OCI-LY7 (cell line): ENCODE measurements at regions of chr1 and their contacts with region 1.

Region 1: GRCh38 chr1:204053893-204054292 is 19.0 kb upstream of the SOX13 start:
- DNase-seq: no peak
- H3K4me3 ChIP-seq: no peak overlapping the region
- H3K27ac ChIP-seq: no peak overlapping the region
- H3K4me1 ChIP-seq: no peaks in the 10 kb centered on the region
- CTCF ChIP-seq: no peak

Region 2: DNA sequence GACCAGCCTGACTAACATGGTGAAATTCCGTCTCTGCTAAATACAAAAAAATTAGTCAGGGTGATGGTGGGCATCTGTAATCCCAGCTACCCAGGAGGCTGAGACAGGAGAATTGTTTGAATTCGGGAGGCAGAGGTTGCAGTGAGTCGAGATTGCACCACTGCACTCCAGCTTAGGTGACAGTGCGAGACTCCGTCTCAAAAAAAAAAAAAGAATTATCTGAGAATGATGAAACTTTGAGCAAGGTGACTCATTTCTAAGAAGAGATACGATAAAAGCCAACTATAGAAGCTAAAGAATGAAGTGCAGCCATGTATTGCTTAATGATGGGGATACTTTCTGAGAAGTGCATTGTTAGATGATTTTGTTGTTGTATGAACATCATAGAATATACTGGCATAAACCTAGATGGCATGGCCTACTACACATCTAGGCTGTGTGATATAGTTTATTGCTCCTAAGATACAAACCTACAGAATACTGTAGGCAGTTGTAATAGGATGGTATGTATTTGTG is 127.8 kb before region 1 on chr1:
- CTCF ChIA-PET with region 1: no interaction called
- POLR2A ChIA-PET with region 1: no interaction called
- intact Hi-C with region 1: no loop called
- DNase-seq: no peak
- H3K4me3 ChIP-seq: no peak overlapping the region
- H3K27ac ChIP-seq: no peak overlapping the region
- H3K4me1 ChIP-seq: no peaks in the 10 kb centered on the region
- CTCF ChIP-seq: no peak

Region 3: DNA sequence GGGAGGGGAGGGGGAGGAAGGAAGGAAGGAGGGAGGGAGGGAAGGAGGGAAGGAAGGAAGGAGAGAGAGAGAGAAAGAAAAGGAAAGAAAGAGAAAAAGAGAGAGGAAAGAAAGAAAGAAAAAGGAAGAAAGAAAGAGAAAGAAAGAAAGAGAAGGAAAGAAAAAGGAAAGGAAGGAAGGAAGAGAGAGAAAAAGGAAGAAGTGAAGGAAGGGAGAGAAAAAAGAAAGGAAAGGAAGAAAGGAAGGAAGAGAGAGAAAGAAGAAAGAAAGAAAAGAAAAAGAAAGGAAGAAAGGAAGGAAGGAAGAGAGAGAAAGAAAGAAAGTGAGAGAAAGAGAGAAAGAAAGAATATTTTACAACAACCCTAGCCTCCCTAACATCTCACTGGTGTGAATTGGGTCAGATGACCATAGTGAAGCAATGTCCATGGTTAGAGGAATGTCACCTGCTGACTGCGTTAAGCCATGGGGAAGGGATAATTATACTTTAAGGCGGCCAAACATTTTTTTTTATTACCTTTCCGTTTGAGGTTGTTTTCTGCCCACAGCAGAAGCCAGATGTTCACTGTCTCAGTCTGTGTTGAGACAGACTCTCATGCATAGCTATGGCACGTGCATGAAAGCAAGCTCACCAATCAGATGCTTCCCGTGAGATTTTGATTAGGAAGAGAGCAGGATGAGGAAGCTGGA is 116.1 kb before region 1 on chr1:
- CTCF ChIA-PET with region 1: no interaction called
- POLR2A ChIA-PET with region 1: interaction called, 5 read pairs
- intact Hi-C with region 1: loop called (anchors 1 kb)
- DNase-seq: peak; percentile 86
- H3K4me3 ChIP-seq: peak overlapping the region; percentile 5
- H3K27ac ChIP-seq: peak overlapping the region; percentile 91
- H3K4me1 ChIP-seq: peaks cover 67% of the 10 kb centered on the region
- CTCF ChIP-seq: no peak

Region 4: GRCh38 chr1:203986887-203987461 is 66.9 kb before region 1 on chr1:
- CTCF ChIA-PET with region 1: no interaction called
- POLR2A ChIA-PET with region 1: no interaction called
- intact Hi-C with region 1: no loop called
- DNase-seq: no peak
- H3K4me3 ChIP-seq: no peak overlapping the region
- H3K27ac ChIP-seq: no peak overlapping the region
- H3K4me1 ChIP-seq: no peaks in the 10 kb centered on the region
- CTCF ChIP-seq: no peak

Region 5: DNA sequence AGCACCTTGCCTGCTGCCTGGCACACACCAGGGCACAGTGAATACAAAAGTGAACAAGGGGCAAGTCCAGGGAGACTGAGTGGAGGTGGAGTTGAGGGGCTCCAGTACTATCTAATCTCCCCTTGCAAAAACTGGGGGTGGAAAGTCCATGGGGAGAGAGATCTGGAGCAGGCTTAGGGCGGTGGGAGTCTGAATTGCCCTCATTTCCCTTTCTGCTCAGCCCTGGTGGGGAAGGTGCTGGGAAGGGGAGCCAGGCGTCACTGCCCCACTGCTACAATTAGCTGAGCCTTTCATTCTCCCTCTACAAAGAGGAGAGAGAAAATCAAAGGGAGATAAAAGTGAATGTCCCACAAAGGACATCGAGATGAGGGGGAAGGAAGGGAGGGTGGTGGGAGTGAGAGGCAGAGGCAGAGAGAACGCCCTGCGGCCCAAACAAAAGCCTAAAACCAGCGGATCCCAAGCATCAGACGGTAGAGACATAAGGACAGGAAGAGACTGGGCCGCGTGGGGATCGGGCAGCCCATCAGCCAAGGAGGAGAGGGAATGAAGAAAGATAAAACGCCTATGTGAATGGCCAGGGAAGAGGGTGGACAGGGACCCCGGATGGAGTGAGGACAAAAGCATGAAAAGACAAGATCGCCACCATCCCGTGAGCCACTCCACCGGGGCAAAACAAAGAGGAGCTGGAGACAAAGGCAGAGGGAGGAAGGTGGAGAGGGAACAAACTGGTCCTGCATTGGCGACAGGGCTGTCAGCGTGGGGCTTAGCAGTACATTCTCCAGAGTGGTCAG is 27.8 kb before region 1 on chr1:
- CTCF ChIA-PET with region 1: no interaction called
- POLR2A ChIA-PET with region 1: no interaction called
- intact Hi-C with region 1: no loop called
- DNase-seq: no peak
- H3K4me3 ChIP-seq: no peak overlapping the region
- H3K27ac ChIP-seq: no peak overlapping the region
- H3K4me1 ChIP-seq: no peaks in the 10 kb centered on the region
- CTCF ChIP-seq: no peak